SK-MEL-5 (cell line): ENCODE measurements at regions of chrX and their contacts with region 1.

Region 1: DNA sequence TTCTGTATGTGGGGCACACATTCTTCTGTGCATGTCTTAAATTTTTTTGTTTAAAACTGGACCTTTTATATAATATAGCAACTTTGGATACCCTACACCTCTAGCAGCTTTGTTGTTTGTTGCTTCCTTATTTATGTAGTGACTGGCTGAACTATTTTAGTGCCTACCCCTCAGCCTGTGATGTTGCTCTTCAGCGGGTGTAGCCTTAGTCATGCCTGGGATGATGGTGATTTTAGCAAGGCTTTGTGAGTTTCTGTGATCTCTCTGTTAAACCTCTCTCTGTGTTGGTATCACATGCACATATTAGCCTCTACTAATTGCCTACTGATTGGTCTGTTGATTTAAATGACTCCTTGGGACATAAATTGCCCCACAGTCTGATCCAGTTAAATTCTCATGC is 22.8 kb downstream of the USP9X start:
- DNase-seq: no peak

Region 2: GRCh38 chrX:40922307-40922706 is 185.7 kb before region 1 on chrX:
- in situ Hi-C with region 1: no loop called
- DNase-seq: peak; percentile 73

Region 3: GRCh38 chrX:41027431-41027831 is 80.6 kb before region 1 on chrX:
- in situ Hi-C with region 1: loop called (anchors 10 kb)
- DNase-seq: peak; percentile 67

Region 4: DNA sequence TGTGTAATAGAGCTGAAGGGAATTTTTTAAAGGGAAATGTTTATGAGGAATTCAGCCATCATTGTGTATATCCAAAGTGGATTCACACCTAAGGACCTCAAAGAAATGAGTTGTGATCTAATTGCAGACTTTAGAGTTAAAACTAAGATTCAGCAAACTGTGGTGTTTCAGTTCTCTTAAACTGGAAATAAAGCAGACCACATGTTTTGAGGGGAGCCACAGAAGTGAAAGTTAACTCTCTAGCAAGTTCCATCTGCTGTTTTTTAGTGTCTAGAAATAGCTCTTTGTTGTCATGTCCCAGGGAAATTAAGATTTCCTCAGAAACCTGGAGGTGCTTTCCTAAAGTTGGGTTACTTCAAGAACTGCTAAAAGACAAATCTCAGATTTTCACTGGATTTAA is 128.6 kb after region 1 on chrX:
- in situ Hi-C with region 1: no loop called
- DNase-seq: no peak